BJ (cell line): ENCODE measurements at regions of chr5 and their contacts with region 1.

Region 1: GRCh38 chr5:148457183-148457620 is 73.4 kb downstream of the FBXO38 start:
- DNase-seq: no peak
- H3K4me3 ChIP-seq: no peak overlapping the region
- H3K27me3 ChIP-seq: 0 out of 2 replicates have a peak, but pooled peaks cover 1% of the 10 kb centered on the region
- CTCF ChIP-seq: peak; percentile 35

Region 2: DNA sequence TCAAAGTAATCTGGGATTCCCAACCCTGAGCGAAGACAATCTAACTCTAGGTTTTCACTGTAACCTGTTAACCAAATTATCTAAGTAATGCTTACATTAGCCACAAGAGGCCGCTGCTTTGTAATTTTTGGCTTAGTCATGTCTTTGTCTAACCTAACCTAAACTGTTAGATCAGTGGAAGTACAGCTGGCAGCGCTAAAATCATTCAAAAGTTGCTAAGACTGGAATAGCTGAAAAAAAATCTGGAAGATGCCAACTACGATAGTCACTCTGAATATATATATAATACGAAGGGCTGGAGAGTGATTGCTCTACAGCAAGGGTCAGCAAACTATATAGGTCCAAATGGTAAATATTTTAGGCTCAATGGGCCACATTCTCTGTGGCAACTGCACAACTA is 13.2 kb before region 1 on chr5:
- CTCF ChIA-PET with region 1: interaction called, 36 read pairs
- POLR2A ChIA-PET with region 1: no interaction called
- DNase-seq: peak; percentile 11
- H3K4me3 ChIP-seq: no peak overlapping the region
- H3K27me3 ChIP-seq: no peaks in the 10 kb centered on the region
- CTCF ChIP-seq: peak; percentile 71